Testis (tissue), 5 donors: ENCODE measurements at regions of chr2 and their contacts with region 1.

Region 1: DNA sequence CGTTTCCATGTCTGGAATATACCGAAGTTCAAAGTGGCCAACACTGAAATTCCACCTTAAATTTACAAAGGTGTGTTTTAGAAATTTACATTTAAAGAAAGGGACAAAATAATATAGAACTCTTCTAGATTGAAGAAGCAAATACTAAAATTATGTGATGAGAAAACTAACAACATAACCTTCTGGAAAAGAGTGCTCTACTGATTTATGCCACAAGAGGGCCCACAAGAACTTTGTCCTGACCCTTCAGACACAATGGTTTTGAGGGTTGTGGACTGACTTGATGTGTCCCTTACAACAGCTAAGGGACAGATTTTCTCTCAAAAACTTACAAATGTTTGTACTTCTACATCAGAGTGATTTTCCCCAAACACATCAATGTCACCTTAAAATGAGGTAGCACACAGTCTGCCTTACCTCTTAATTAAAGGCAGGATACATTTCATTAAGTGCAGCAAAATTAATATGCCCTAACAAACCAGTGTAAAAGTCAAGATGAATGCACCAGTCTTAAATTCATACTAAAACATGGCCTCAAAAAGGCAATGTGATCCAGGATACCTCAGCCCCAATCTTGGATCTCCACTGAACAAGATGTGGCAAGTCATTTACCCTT is 36.2 kb downstream of the EIF2AK3 start:
- DNase-seq: peak; percentile 61
- H3K4me3 ChIP-seq: no peak overlapping the region
- H3K27ac ChIP-seq: no peak overlapping the region
- H3K4me1 ChIP-seq: no peaks in the 10 kb centered on the region
- H3K27me3 ChIP-seq: no peaks in the 10 kb centered on the region
- CTCF ChIP-seq: peak; percentile 69 to 75 (median 70)
- POLR2A ChIP-seq: no peak

Region 2: GRCh38 chr2:88355486-88355885 is 235.6 kb before region 1 on chr2:
- intact Hi-C with region 1: no loop called
- DNase-seq: no peak
- H3K4me3 ChIP-seq: no peak overlapping the region
- H3K27ac ChIP-seq: no peak overlapping the region
- H3K4me1 ChIP-seq: no peaks in the 10 kb centered on the region
- H3K27me3 ChIP-seq: no peaks in the 10 kb centered on the region
- CTCF ChIP-seq: no peak
- POLR2A ChIP-seq: no peak

Region 3: DNA sequence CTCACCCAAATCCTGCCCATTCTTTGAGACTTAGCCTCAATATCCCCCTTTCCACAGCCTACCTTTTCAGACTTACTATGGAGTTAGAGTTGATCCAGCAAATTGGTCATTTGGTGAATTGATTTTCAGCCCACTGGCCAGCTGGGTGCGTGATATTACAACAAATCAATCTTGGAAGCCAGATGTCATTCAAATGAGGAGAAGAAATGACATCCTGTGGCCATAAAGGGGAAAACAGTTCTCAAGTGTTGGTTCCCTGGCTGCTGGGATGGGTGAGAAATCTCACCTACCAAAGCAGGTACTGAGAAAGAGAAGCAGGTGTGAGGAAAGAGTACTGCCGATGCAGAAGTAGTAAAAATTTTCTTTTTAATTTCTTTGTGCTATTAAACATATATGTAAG is 101.9 kb before region 1 on chr2:
- intact Hi-C with region 1: no loop called
- DNase-seq: no peak
- H3K4me3 ChIP-seq: no peak overlapping the region
- H3K27ac ChIP-seq: no peak overlapping the region
- H3K4me1 ChIP-seq: no peaks in the 10 kb centered on the region
- H3K27me3 ChIP-seq: no peaks in the 10 kb centered on the region
- CTCF ChIP-seq: no peak
- POLR2A ChIP-seq: no peak

Region 4: DNA sequence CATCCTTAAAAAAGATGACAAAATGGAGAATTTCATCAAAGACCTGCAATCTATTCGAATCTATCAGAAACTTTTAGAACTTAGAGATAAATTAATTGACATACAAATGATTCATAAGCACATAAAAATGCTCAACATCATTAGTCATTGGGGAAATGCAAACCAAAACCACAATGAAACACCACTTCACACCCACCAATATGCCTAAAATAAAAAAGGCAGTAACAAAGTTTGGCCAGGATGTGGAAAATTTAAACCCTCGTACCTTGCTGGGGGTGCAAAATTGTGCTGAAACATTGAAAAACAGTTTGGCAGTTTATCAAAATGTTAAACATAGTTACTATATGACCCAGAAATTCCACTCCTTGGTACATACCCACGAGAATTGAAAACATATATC is 47.6 kb after region 1 on chr2:
- intact Hi-C with region 1: no loop called
- DNase-seq: no peak
- H3K4me3 ChIP-seq: no peak overlapping the region
- H3K27ac ChIP-seq: no peak overlapping the region
- H3K4me1 ChIP-seq: no peaks in the 10 kb centered on the region
- H3K27me3 ChIP-seq: no peaks in the 10 kb centered on the region
- CTCF ChIP-seq: no peak
- POLR2A ChIP-seq: no peak

Region 5: GRCh38 chr2:88669371-88670214 is 78.5 kb after region 1 on chr2:
- intact Hi-C with region 1: loop called (anchors 10 kb)
- DNase-seq: no peak
- H3K4me3 ChIP-seq: no peak overlapping the region
- H3K27ac ChIP-seq: no peak overlapping the region
- H3K4me1 ChIP-seq: no peaks in the 10 kb centered on the region
- H3K27me3 ChIP-seq: no peaks in the 10 kb centered on the region
- CTCF ChIP-seq: peak; percentile 34 to 72 (median 50)
- POLR2A ChIP-seq: no peak